PC-9 (cell line): ENCODE measurements at regions of chr12 and their contacts with region 1.

Region 1: GRCh38 chr12:109074866-109075265 is 18.4 kb downstream of the ALKBH2 start:
- DNase-seq: no peak
- H3K4me3 ChIP-seq: no peak overlapping the region
- H3K27ac ChIP-seq: no peak overlapping the region
- H3K4me1 ChIP-seq: no peaks in the 10 kb centered on the region
- H3K27me3 ChIP-seq: no peaks in the 10 kb centered on the region
- CTCF ChIP-seq: no peak

Region 2: GRCh38 chr12:108531929-108532848 is 542.7 kb before region 1 on chr12:
- CTCF ChIA-PET with region 1: no interaction called
- POLR2A ChIA-PET with region 1: interaction called, 10 read pairs
- intact Hi-C with region 1: no loop called
- DNase-seq: no peak
- H3K4me3 ChIP-seq: no peak overlapping the region
- H3K27ac ChIP-seq: no peak overlapping the region
- H3K4me1 ChIP-seq: no peaks in the 10 kb centered on the region
- H3K27me3 ChIP-seq: no peaks in the 10 kb centered on the region
- CTCF ChIP-seq: no peak

Region 3: DNA sequence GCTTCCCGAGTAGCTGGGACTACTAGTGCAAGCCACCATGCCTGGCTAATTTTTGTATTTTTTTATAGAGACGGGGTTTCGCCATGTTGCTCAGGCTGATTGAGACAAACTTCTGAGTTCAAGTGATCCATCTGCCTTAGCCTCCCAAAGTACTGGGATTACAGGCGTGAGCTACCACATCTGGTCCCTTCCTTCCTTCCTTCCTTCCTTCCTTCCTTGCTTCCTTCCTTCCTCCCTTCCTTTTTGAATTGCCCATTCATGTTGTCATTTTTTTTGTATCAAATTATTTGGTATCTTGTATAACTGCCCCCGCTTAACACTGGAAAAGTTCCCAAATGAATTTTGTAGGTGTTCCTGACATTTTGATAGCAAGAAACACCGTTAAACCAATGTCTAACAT is 1439.0 kb after region 1 on chr12:
- CTCF ChIA-PET with region 1: no interaction called
- POLR2A ChIA-PET with region 1: no interaction called
- intact Hi-C with region 1: no loop called
- DNase-seq: no peak
- H3K4me3 ChIP-seq: no peak overlapping the region
- H3K27ac ChIP-seq: no peak overlapping the region
- H3K4me1 ChIP-seq: no peaks in the 10 kb centered on the region
- H3K27me3 ChIP-seq: no peaks in the 10 kb centered on the region
- CTCF ChIP-seq: no peak